ENCODE measurements at regions of chr10 and their contacts with region 1.

Region 1: GRCh38 chr10:58414270-58415041 is 29.2 kb downstream of the TFAM start:
- H3K4me3 ChIP-seq: no peak overlapping the region
- H3K27ac ChIP-seq: no peak overlapping the region
- H3K4me1 ChIP-seq: no peaks in the 10 kb centered on the region
- CTCF ChIP-seq: peak; percentile 69; the same call in 1 of the 2 replicates

Region 2: DNA sequence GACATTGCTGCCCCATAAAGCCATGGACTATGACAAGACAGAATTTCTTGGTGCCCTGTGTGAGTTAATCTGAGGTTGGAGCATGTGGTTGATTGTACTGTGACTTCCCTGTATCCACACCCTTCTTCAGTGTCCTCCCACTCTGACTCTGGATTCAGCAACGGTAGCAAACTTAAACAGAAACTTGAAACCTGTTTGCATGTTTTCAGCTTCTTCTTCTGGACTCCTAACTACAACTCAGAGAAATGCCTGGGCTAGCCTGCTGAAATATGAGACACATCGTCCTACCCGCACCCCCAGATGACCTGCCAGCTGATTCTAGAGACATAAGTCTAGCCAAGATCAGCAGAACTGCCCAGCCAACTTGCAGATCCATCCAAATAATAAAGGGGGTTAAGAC is 225.2 kb before region 1 on chr10:
- CTCF ChIA-PET with region 1: no interaction called
- POLR2A ChIA-PET with region 1: no interaction called
- H3K4me3 ChIP-seq: no peak overlapping the region
- H3K27ac ChIP-seq: no peak overlapping the region
- H3K4me1 ChIP-seq: peaks cover 2% of the 10 kb centered on the region; the same call in 1 of the 2 replicates
- CTCF ChIP-seq: no peak

Region 3: GRCh38 chr10:58372607-58373441 is 41.6 kb before region 1 on chr10:
- CTCF ChIA-PET with region 1: no interaction called
- POLR2A ChIA-PET with region 1: no interaction called
- H3K4me3 ChIP-seq: no peak overlapping the region
- H3K27ac ChIP-seq: no peak overlapping the region
- H3K4me1 ChIP-seq: no peaks in the 10 kb centered on the region
- CTCF ChIP-seq: no peak

Region 4: GRCh38 chr10:58467931-58468635 is 53.6 kb after region 1 on chr10:
- CTCF ChIA-PET with region 1: interaction called, 11 read pairs
- POLR2A ChIA-PET with region 1: interaction called, 4 read pairs
- H3K4me3 ChIP-seq: no peak overlapping the region
- H3K27ac ChIP-seq: no peak overlapping the region
- H3K4me1 ChIP-seq: peaks cover 5% of the 10 kb centered on the region; the same call in 1 of the 2 replicates
- CTCF ChIP-seq: no peak

Region 5: DNA sequence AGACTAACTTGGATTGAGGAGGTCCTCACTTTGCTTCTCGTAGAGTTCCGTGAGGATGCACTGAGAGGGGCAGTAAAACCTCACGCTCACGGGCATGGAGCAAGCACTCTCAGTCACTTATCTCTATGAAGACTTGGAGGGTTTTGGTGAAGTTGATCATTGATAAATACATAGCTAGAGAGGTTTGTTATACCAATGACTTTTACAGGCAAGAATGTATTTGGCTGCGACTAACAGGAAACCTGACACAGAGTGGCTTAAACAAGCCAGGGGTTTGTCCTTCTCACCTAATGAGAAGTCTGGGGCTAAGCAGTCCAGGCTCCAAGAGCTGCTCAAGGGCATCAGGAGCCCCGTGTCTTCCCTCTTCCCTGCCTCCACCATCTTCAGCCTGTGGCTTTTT is 104.3 kb after region 1 on chr10:
- CTCF ChIA-PET with region 1: interaction called, 17 read pairs
- POLR2A ChIA-PET with region 1: interaction called, 4 read pairs
- H3K4me3 ChIP-seq: no peak overlapping the region
- H3K27ac ChIP-seq: no peak overlapping the region
- H3K4me1 ChIP-seq: 0 out of 2 replicates have a peak, but pooled peaks cover 3% of the 10 kb centered on the region
- CTCF ChIP-seq: no peak

Region 6: DNA sequence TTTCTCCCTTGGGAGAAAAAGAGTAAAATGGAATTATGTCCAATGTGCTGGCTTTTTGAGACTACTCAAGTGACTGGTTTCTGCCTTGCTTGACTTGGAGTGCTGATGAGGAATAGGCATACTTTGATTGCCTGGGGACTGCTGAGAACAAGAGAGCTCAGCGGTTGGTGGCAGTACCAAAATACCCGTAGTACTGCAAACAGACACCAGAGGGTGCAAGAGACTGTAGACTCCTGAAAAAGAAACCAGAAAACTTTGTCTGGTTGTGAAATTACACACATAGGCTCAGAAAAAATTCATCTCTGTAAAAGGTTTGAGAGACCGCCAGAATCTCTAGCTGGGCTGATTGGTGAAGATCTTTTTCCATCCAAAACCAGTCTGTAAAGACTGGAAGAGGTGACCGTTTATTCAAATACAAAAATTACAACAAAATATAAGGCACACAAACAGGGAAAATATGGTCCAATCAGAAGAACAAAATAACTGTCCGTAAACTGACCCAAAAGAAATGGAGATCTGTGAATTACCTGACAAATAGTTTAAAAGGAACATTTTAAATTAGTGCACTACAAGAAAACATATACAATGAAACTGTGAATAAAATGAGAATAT is 116.7 kb after region 1 on chr10:
- CTCF ChIA-PET with region 1: interaction called, 51 read pairs
- POLR2A ChIA-PET with region 1: no interaction called
- H3K4me3 ChIP-seq: no peak overlapping the region
- H3K27ac ChIP-seq: no peak overlapping the region
- H3K4me1 ChIP-seq: no peaks in the 10 kb centered on the region
- CTCF ChIP-seq: no peak

Region 7: GRCh38 chr10:58641095-58641531 is 226.7 kb after region 1 on chr10:
- CTCF ChIA-PET with region 1: interaction called, 34 read pairs
- POLR2A ChIA-PET with region 1: no interaction called
- H3K4me3 ChIP-seq: no peak overlapping the region
- H3K27ac ChIP-seq: no peak overlapping the region
- H3K4me1 ChIP-seq: peaks cover 5% of the 10 kb centered on the region; the same call in 1 of the 2 replicates
- CTCF ChIP-seq: peak; percentile 20; the same call in 1 of the 2 replicates

Region 8: DNA sequence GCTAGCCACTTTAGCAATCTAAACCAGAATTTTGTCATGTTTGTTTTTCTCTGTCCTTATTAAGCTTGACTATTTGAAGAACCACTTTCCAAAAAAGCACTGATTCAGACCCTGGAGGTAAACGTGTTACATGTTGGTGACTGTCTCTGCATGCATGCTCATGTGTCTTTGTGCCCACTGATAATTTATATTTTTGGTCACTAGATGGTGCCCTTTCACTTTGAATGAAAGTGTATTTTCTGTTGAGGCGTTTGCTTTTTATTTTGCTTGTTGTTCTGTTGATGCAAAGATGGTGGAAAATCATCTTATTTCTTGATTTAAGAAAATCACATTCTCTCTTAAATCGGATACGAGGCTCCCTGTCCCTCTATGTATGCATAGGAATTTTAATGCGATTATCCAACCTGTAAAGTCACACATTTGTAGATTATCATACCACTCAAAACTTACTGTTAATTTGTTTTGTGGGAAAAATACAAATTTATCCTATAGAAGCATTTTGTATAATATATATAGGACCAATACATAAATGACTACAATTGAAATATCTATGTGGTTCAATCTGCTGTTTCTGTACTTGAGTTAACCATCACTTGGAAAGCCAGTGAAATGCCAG is 367.5 kb after region 1 on chr10:
- CTCF ChIA-PET with region 1: interaction called, 14 read pairs
- POLR2A ChIA-PET with region 1: no interaction called
- H3K4me3 ChIP-seq: no peak overlapping the region
- H3K27ac ChIP-seq: no peak overlapping the region
- H3K4me1 ChIP-seq: no peaks in the 10 kb centered on the region
- CTCF ChIP-seq: no peak

Region 9: GRCh38 chr10:59857049-59857448 is 1442.6 kb after region 1 on chr10:
- CTCF ChIA-PET with region 1: no interaction called
- POLR2A ChIA-PET with region 1: no interaction called
- H3K4me3 ChIP-seq: no peak overlapping the region
- H3K27ac ChIP-seq: no peak overlapping the region
- H3K4me1 ChIP-seq: no peaks in the 10 kb centered on the region; the same call in 1 of the 2 replicates
- CTCF ChIP-seq: no peak

Measured in HEK293 (cell line).